ENCODE measurements at regions of chr5 and their contacts with region 1.

Region 1: DNA sequence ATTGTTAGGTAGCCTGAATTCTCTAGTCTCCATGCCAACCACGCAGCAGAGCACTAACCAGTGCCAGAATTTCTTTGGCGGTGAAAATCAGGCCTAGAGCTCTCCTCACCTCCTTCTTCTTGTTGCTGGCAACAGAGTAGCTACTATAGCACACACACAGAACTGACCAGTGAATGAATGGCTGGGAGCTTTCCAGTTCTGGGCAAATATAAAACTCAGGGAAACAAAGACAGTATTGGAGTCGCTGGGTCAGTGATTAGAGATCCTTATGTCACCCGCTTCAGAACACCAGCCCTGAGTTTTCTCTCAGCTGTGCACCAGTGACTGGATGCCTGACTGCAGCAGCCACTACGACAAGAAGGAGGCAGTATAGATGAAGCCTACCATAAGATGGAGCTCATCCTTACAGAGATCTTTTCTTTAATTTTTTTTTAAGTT is 26.9 kb upstream of the FEM1C start:
- DNase-seq: no peak
- H3K4me3 Mint-ChIP-seq: no peak overlapping the region
- H3K27ac Mint-ChIP-seq: no peak overlapping the region
- H3K4me1 Mint-ChIP-seq: peaks cover 3% of the 10 kb centered on the region
- H3K27me3 Mint-ChIP-seq: peaks cover 3% of the 10 kb centered on the region

Region 2: DNA sequence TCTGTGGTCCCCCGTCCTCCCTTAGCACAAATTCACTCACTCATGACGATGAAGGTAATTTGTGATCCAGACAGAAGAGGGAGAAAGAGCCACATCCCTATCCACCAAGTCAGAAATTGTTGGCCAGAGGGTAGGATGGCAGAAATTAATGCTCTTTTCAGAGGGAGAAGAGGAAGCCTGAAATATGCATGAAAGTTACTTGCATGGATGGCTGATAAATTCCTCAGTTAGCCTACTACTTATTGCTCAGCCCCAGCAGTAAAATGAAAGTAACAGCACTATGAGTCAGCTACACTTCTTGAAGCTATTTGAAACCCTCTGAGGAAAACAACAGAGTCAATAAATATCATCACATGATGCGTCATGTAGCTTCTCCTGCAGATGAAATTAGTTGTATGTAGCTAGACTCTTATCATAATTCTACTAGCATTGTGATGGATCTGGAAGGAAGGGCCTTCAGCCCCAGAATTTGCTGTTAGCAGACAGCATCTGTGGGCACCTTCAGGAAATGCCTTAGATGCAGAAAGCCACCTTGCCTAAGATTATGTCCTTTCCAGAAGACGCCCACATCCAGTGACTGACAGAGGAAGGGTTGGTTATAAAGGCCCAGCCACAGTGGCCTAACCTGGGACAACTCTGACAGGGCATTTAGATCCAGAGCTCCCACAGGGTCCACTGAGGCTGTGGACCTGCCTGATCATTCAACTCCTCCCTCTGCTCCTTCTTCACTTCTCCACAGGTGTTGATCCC is 193.8 kb before region 1 on chr5:
- CTCF ChIA-PET with region 1: interaction called, 5 read pairs
- intact Hi-C with region 1: loop called (anchors 5 kb)
- DNase-seq: no peak
- H3K4me3 Mint-ChIP-seq: no peak overlapping the region
- H3K27ac Mint-ChIP-seq: no peak overlapping the region
- H3K4me1 Mint-ChIP-seq: peaks cover 6% of the 10 kb centered on the region
- H3K27me3 Mint-ChIP-seq: no peaks in the 10 kb centered on the region